WTC11 (cell line): ENCODE measurements at regions of chr9 and their contacts with region 1.

Region 1: DNA sequence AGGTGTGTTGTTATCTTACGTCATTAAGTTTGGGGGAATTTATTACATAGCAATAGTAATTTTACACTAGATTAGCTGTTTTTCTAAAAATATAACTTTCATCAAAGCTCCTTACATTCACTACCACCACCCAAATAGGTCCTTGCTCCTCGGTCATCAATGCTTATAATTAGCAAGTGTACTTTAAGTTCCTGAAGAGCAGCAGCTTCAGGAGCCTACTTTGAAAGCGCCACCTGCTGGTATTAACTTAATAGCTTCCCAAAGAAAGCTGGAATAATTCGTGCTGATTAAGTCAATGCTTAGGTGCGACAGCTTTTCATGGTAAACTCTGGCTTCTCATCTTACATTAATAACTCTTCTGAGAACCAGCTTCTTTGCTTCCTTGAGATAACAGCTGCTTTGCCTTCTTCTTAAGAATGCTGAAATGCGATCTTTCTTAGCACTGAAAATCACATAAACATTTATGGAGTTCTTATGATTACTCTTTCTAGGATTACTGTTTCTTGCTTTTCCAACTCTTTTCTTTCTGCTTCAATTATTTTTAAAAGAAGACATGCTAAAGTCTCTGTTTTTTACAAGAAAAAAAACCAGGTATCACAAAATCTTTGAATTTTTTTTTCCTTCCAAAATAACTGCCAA is 10.0 kb upstream of the C5 start:
- DNase-seq: no peak
- ATAC-seq: peak; percentile 18; the same call in 1 of the 2 replicates
- H3K4me3 Mint-ChIP-seq: no peak overlapping the region
- H3K27ac Mint-ChIP-seq: no peak overlapping the region
- H3K4me1 Mint-ChIP-seq: no peaks in the 10 kb centered on the region
- H3K27me3 Mint-ChIP-seq: peaks cover 7% of the 10 kb centered on the region; the same call in 1 of the 2 replicates
- CTCF ChIP-seq: peak; percentile 47

Region 2: DNA sequence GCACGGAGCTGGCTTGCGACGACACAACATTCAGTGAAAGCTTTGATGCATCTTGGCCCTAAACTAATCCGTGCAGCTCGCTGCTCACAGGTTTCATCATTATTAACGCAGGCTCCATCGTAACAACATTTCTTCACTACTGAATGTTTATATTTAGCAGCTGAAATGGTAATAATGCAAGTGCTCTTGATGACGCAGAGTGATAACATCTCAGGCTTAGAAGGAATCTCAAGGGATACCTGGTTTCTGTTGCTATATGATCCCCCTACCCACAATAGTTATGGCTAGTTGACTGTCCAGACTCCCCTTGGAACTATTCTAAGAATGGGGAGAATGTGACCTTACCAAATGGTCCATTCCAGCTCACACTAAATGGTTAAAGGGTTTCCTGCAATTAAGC is 46.2 kb before region 1 on chr9:
- CTCF ChIA-PET with region 1: interaction called, 10 read pairs
- POLR2A ChIA-PET with region 1: no interaction called
- DNase-seq: no peak
- ATAC-seq: no peak
- H3K4me3 Mint-ChIP-seq: no peak overlapping the region
- H3K27ac Mint-ChIP-seq: no peak overlapping the region
- H3K4me1 Mint-ChIP-seq: peaks cover 6% of the 10 kb centered on the region; the same call in 1 of the 2 replicates
- H3K27me3 Mint-ChIP-seq: no peaks in the 10 kb centered on the region; the same call in 1 of the 2 replicates
- CTCF ChIP-seq: no peak

Region 3: DNA sequence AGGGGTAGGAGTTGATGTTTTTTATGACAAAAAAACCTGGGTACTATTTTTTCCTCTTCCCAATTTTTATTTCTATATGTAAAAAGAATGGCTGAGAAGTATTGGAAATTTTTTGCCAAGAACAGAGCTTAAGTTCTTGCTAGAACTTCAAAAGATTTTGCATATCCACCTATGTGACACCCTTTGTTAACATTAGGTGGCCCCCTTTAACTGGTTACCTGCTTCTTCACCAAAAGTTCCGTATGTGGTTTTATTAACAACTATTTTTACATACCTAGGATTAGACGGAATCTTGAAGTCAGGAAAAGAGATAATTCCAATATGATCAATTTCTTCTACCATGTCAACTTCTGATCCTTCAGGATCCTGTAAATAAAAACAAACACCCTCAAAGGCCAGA is 25.6 kb before region 1 on chr9:
- CTCF ChIA-PET with region 1: interaction called, 13 read pairs
- POLR2A ChIA-PET with region 1: no interaction called
- DNase-seq: no peak
- ATAC-seq: no peak
- H3K4me3 Mint-ChIP-seq: no peak overlapping the region
- H3K27ac Mint-ChIP-seq: no peak overlapping the region
- H3K4me1 Mint-ChIP-seq: no peaks in the 10 kb centered on the region
- H3K27me3 Mint-ChIP-seq: peaks cover 3% of the 10 kb centered on the region; the same call in 1 of the 2 replicates
- CTCF ChIP-seq: no peak

Region 4: DNA sequence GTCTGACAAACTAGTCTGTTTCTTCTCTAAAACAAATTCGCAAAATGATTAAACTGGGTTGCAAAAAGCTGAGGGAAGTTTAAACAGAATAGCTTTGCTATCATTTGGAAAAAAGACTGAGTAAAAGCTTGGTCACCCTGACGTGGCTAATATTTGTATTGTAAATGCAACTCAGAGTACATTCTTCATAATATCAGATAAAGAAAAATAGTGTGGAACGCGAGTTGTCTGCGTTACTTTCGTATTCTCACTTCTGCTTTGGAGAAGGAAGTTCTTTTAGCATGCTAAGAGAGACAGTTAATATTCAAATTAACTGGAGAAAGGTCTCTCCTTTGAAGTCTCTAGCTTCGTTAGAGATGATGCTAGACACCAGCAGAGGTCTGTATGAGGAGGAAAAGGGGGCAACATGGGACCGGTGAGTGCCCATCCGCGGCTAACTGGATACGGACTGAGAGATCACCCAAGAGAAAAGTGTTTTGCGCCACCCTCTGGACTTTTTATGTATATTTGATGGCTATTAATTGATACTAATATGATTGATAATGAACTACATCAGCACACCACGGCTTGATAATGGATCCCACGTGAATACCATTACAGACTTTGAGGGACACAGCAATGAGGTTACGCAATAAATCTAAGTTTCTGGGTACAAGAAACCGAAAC is 11.8 kb after region 1 on chr9:
- CTCF ChIA-PET with region 1: interaction called, 19 read pairs
- POLR2A ChIA-PET with region 1: no interaction called
- DNase-seq: no peak
- ATAC-seq: no peak
- H3K4me3 Mint-ChIP-seq: no peak overlapping the region
- H3K27ac Mint-ChIP-seq: no peak overlapping the region
- H3K4me1 Mint-ChIP-seq: peaks cover 23% of the 10 kb centered on the region
- H3K27me3 Mint-ChIP-seq: peaks cover 93% of the 10 kb centered on the region
- CTCF ChIP-seq: no peak